CD8-positive, alpha-beta T cell (primary cell): ENCODE measurements at regions of chr7 and their contacts with region 1.

Region 1: DNA sequence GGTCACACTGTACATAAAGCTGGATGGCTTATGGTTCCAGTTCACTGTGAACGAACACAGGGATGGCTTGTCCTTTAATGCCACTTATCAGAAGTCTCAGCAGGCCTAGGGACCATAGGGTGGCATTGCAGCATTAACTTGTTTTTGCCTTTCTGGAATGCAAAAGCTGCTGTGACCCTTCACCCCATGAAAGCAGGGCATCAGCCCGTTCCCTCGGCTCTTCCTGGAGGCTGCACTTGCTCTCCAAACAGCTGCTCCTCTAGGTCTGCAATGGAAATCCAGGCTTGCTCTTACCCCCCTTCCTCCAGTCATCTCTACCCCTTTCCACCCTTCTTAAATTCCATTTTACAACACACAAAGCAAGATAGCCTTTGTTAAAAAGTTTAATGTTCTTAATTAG is 17.9 kb upstream of the NEUROD6 start:
- DNase-seq: no peak
- ATAC-seq: no peak
- H3K4me3 ChIP-seq: no peak overlapping the region
- H3K4me3 Mint-ChIP-seq: no peak overlapping the region
- H3K27ac ChIP-seq: no peak overlapping the region
- H3K27ac Mint-ChIP-seq: no peak overlapping the region
- H3K4me1 ChIP-seq: no peaks in the 10 kb centered on the region
- H3K4me1 Mint-ChIP-seq: no peaks in the 10 kb centered on the region
- H3K27me3 ChIP-seq: no peaks in the 10 kb centered on the region
- H3K27me3 Mint-ChIP-seq: no peaks in the 10 kb centered on the region
- CTCF ChIP-seq: no peak

Region 2: GRCh38 chr7:31284106-31284505 is 74.4 kb before region 1 on chr7:
- CTCF ChIA-PET with region 1: no interaction called
- POLR2A ChIA-PET with region 1: no interaction called
- intact Hi-C with region 1: loop called in 1 of 2 experiments (anchors 2 kb)
- DNase-seq: no peak
- ATAC-seq: no peak
- H3K4me3 ChIP-seq: no peak overlapping the region
- H3K4me3 Mint-ChIP-seq: no peak overlapping the region
- H3K27ac ChIP-seq: no peak overlapping the region
- H3K27ac Mint-ChIP-seq: no peak overlapping the region
- H3K4me1 ChIP-seq: no peaks in the 10 kb centered on the region
- H3K4me1 Mint-ChIP-seq: no peaks in the 10 kb centered on the region
- H3K27me3 ChIP-seq: no peaks in the 10 kb centered on the region
- H3K27me3 Mint-ChIP-seq: no peaks in the 10 kb centered on the region
- CTCF ChIP-seq: no peak

Region 3: GRCh38 chr7:31368620-31369019 is 10.2 kb after region 1 on chr7:
- CTCF ChIA-PET with region 1: no interaction called
- POLR2A ChIA-PET with region 1: no interaction called
- intact Hi-C with region 1: loop called in 1 of 2 experiments (anchors 1 kb)
- DNase-seq: no peak
- ATAC-seq: no peak
- H3K4me3 ChIP-seq: no peak overlapping the region
- H3K4me3 Mint-ChIP-seq: no peak overlapping the region
- H3K27ac ChIP-seq: no peak overlapping the region
- H3K27ac Mint-ChIP-seq: no peak overlapping the region
- H3K4me1 ChIP-seq: no peaks in the 10 kb centered on the region
- H3K4me1 Mint-ChIP-seq: no peaks in the 10 kb centered on the region
- H3K27me3 ChIP-seq: no peaks in the 10 kb centered on the region
- H3K27me3 Mint-ChIP-seq: no peaks in the 10 kb centered on the region
- CTCF ChIP-seq: no peak